K562 (cell line): ENCODE measurements at regions of chr6 and their contacts with region 1.

Region 1: GRCh38 chr6:16332175-16332542 is 93.8 kb downstream of the GMPR start:
- DNase-seq: peak; percentile 91 to 92 (median 91)
- ATAC-seq: peak; percentile 91
- H3K4me3 ChIP-seq: no peak overlapping the region
- H3K27ac ChIP-seq: no peak overlapping the region
- H3K4me1 ChIP-seq: peaks cover 9 to 12% of the 10 kb centered on the region in 2 experiments; a peak in 4 of 5 replicates
- H3K27me3 ChIP-seq: no peaks in the 10 kb centered on the region; a peak in 1 of 5 replicates
- CTCF ChIP-seq: peak; percentile 94 to 99 (median 97)
- EP300 ChIP-seq: peak; percentile 35; the same call in 1 of the 2 replicates
- POLR2A ChIP-seq: no peak
- RAD21 ChIP-seq: peak; percentile 98 to 99

Region 2: GRCh38 chr6:16286148-16286522 is 46.0 kb before region 1 on chr6:
- CTCF ChIA-PET with region 1: no interaction called
- POLR2A ChIA-PET with region 1: no interaction called
- in situ Hi-C with region 1: no loop called
- intact Hi-C with region 1: loop called (anchors 1 kb)
- DNase-seq: peak; percentile 52 to 62 (median 58)
- ATAC-seq: peak; percentile 82
- H3K4me3 ChIP-seq: no peak overlapping the region
- H3K27ac ChIP-seq: no peak overlapping the region
- H3K4me1 ChIP-seq: peaks cover 0 to 7% of the 10 kb centered on the region in 2 experiments; a peak in 1 of 5 replicates
- H3K27me3 ChIP-seq: no peaks in the 10 kb centered on the region
- CTCF ChIP-seq: peak; percentile 67 to 73 (median 67)
- EP300 ChIP-seq: no peak
- POLR2A ChIP-seq: no peak
- RAD21 ChIP-seq: peak in 1 of 2 experiments; percentile 40; a peak in 2 of 4 replicates

Region 3: DNA sequence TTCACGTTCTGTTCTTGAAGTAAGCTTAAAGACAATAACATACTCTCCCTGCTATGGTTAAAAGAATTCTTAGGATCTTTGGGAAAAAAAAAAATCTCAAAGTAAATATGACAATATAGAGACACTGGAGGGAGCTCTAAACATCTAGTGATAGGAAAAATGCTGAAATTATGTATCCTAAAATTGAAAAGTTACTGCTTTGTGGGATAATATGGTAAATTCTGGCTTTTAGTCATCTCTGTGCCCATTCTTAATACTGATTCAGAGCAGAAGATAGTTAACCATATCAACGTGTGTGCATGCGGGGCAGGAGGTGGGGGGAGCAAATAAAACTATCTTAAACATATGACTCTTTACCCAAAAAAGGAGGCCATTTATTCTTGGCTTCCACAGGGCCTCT is 71.7 kb after region 1 on chr6:
- CTCF ChIA-PET with region 1: interaction called, 68 read pairs
- POLR2A ChIA-PET with region 1: no interaction called
- in situ Hi-C with region 1: loop called (anchors 5 kb)
- intact Hi-C with region 1: loop called (anchors 1 kb)
- DNase-seq: no peak
- ATAC-seq: no peak
- H3K4me3 ChIP-seq: no peak overlapping the region
- H3K27ac ChIP-seq: no peak overlapping the region
- H3K4me1 ChIP-seq: no peaks in the 10 kb centered on the region
- H3K27me3 ChIP-seq: peaks cover 22 to 40% of the 10 kb centered on the region in 2 experiments
- CTCF ChIP-seq: peak in 1 of 3 experiments; percentile 42; a peak in 2 of 6 replicates
- EP300 ChIP-seq: no peak
- POLR2A ChIP-seq: no peak
- RAD21 ChIP-seq: peak in 1 of 2 experiments; percentile 36; a peak in 3 of 4 replicates

Region 4: GRCh38 chr6:16494793-16495192 is 162.6 kb after region 1 on chr6:
- CTCF ChIA-PET with region 1: no interaction called
- POLR2A ChIA-PET with region 1: no interaction called
- in situ Hi-C with region 1: no loop called
- intact Hi-C with region 1: loop called (anchors 5 kb)
- DNase-seq: no peak
- ATAC-seq: no peak
- H3K4me3 ChIP-seq: no peak overlapping the region
- H3K27ac ChIP-seq: no peak overlapping the region
- H3K4me1 ChIP-seq: no peaks in the 10 kb centered on the region
- H3K27me3 ChIP-seq: peaks cover 0 to 4% of the 10 kb centered on the region in 2 experiments; a peak in 1 of 5 replicates
- CTCF ChIP-seq: no peak
- EP300 ChIP-seq: no peak
- POLR2A ChIP-seq: no peak
- RAD21 ChIP-seq: no peak

Region 5: DNA sequence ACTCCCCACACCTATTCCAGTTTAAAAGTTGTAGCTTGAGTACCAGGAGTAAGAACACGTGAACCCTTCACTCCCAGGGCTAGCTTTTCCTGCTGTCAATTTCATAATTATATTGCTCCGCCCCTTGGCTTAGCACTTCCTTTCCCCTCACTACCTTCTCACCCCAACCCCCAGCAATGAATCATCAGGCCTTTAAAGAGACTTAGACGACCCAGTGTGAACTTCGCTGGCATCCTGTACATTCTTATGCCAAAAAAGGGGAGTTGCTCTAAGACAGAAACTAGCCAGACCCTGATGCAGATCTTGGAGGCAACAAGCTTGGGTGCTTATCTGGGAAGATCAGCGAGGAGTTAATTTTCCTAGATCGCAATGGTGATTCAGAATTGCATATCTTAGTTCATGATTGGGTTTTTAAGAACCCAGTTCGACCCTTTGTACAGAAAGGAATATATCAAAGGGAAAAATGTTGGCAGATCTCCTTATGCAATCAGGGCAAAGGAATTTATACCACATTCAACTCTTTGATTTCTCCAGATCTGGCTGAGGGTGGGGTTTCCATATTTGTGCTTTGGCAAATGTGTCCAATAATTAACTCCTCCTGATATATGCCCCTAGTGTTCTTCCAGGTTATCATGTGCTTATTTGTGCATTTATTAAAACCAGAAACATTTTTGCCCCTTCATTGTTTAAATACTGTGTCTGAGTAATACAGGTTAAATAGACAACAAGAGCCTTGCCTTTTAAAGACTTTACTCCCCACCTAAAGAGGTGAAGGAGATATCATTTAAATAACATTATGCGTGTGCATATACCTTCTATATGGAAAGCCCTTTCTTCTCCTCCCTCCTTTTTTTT is 437.2 kb after region 1 on chr6:
- CTCF ChIA-PET with region 1: interaction called, 3 read pairs
- POLR2A ChIA-PET with region 1: no interaction called
- in situ Hi-C with region 1: loop called (anchors 5 kb)
- intact Hi-C with region 1: loop called (anchors 5 kb)
- DNase-seq: peak; percentile 35 to 75 (median 48)
- ATAC-seq: peak; percentile 79
- H3K4me3 ChIP-seq: no peak overlapping the region
- H3K27ac ChIP-seq: no peak overlapping the region
- H3K4me1 ChIP-seq: peaks cover 0 to 18% of the 10 kb centered on the region in 2 experiments; a peak in 2 of 5 replicates
- H3K27me3 ChIP-seq: no peaks in the 10 kb centered on the region
- CTCF ChIP-seq: no peak
- EP300 ChIP-seq: no peak
- POLR2A ChIP-seq: no peak
- RAD21 ChIP-seq: 0 out of 4 replicates have a peak, but pooled peaks of 1 of the 2 experiments have one; percentile 11

Region 6: DNA sequence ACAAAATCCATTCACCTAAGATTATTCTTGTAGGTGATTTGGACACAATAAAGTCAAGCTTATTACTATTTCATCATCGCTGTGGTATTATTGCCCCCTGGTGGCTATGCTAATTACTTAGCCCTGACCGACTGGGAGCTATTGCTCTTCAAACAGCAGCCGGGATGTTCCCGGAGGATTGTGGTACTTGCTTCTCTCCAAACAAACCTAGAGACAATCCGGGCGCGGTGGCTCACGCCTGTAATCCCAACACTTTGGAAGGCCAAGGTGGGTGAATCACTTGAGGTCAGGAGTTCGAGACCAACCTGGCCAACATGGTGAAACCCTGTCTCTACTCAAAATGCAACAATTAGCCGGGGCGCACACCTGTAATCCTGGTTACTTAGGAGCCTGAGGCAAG is 754.3 kb after region 1 on chr6:
- CTCF ChIA-PET with region 1: no interaction called
- POLR2A ChIA-PET with region 1: no interaction called
- in situ Hi-C with region 1: no loop called
- intact Hi-C with region 1: loop called (anchors 5 kb)
- DNase-seq: peak; percentile 52 to 60 (median 58)
- ATAC-seq: peak; percentile 87
- H3K4me3 ChIP-seq: no peak overlapping the region
- H3K27ac ChIP-seq: no peak overlapping the region
- H3K4me1 ChIP-seq: no peaks in the 10 kb centered on the region
- H3K27me3 ChIP-seq: no peaks in the 10 kb centered on the region
- CTCF ChIP-seq: peak; percentile 50 to 73 (median 63)
- EP300 ChIP-seq: no peak
- POLR2A ChIP-seq: no peak
- RAD21 ChIP-seq: peak; percentile 69 to 75